Heart right ventricle (tissue), 16 donors: ENCODE measurements at regions of chr6 and their contacts with region 1.

Region 1: GRCh38 chr6:98797217-98797994 is 37.0 kb upstream of the POU3F2 start:
- DNase-seq: no peak
- ATAC-seq: no peak
- H3K4me3 ChIP-seq: no peak overlapping the region
- H3K27ac ChIP-seq: no peak overlapping the region
- H3K4me1 ChIP-seq: no peaks in the 10 kb centered on the region
- H3K27me3 ChIP-seq: peaks cover 0 to 34% (median 8%) of the 10 kb centered on the region in 7 donors
- CTCF ChIP-seq: no peak

Region 2: DNA sequence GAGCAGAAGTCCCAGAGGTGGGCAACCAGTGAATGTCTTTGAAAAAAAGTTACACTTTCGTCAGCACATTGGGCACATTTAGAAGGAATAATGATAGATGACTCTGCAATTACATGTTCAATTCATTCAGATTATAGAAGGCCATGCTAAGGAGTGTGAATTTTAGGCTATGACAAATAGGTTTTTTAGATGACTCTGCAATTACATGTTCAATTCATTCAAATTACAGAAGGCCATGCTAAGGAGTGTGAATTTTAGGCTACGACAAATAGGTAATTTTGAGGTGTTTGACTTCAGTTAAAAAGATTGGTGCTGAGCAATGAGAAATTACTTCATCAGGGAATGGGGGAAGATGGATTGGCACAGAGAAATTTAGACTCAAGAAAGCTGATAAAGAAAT is 769.5 kb before region 1 on chr6:
- intact Hi-C with region 1: loop called in 1 of 10 experiments (anchors 5 kb)
- DNase-seq: no peak
- ATAC-seq: no peak
- H3K4me3 ChIP-seq: no peak overlapping the region
- H3K27ac ChIP-seq: no peak overlapping the region
- H3K4me1 ChIP-seq: no peaks in the 10 kb centered on the region
- H3K27me3 ChIP-seq: no peaks in the 10 kb centered on the region
- CTCF ChIP-seq: no peak